ENCODE measurements at regions of chr16 and their contacts with region 1.

Region 1: DNA sequence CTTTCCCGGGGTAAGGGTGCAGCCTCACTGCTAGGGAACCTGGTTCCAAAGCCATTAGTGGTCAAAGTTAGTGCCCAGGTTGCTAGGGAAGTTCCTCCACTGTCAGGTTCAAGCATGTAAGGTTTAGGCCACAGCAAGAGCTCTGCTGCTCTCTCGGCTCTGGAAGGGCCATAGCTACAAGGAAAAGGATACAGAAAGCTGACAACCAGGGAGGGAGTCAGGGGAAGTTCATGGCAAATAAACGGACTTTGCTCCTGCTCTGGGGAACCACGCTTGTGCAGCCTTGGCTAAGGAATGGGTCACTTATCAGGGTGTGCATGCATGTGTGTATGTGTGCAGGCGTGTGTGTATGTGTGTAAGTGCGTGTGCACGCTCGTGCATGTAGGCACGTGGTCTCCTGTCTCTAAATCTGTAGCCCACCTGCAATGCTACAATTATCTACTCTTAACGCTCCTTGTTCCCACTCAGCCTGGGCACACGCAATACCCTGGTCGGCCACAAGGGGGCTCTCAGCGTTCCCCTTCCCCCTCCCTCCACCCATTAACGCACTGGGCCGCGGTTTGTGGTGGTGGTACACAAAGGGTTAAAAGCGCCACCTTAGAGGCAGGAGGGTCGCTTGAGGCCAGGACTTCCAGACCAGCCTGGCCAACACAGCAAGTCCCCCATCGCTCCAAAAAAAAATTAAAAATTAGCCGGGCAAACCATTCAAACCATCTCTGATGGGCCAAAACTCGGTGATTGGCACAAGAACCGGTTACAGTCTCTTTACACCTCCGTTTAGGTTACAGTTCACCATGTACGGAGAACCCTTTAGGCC is 48.4 kb upstream of the KDM8 start:
- DNase-seq: peak; percentile 46 to 60 (median 53)
- H3K4me3 ChIP-seq: no peak overlapping the region
- H3K4me3 Mint-ChIP-seq: peak overlapping the region in 2 of 8 donors; percentile 19 to 48
- H3K27ac ChIP-seq: no peak overlapping the region
- H3K27ac Mint-ChIP-seq: peak overlapping the region in 5 of 7 donors; percentile 35 to 72 (median 64)
- H3K4me1 ChIP-seq: peaks cover 8% of the 10 kb centered on the region
- H3K4me1 Mint-ChIP-seq: peaks cover 3 to 9% (median 5%) of the 10 kb centered on the region in 4 donors
- H3K27me3 ChIP-seq: no peaks in the 10 kb centered on the region
- H3K27me3 Mint-ChIP-seq: no peaks in the 10 kb centered on the region

Region 2: DNA sequence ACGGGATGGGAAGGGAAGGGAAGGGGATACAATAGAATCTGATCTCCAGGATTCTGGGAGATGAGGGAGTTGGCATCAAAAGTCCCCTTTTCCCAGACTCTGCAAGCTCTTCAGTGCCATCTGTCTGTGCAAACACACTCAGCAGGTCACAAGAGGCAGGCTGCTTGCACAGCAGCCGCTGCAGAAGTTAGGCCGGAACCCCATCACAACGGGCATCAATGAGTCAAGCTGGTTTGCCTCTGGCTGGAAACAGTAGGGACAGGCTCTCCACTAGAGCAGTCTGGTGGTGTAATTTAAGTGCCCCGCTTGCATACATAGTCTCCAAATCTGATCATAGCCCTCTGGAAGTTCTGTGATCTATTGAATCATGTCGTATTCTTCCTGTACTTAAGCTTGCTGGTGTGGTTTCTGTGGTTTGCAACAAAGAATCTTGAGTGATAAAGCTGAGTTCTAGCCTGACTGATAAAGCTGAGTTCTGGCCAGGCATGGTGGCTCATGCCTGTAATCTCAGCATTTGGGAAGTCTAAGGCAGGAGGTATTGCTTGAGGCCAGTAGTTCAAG is 14.7 kb after region 1 on chr16:
- CTCF ChIA-PET with region 1: interaction called, 415 read pairs
- POLR2A ChIA-PET with region 1: interaction called, 11 read pairs
- intact Hi-C with region 1: loop called (anchors 1 kb)
- DNase-seq: peak; percentile 86 to 93 (median 87)
- H3K4me3 ChIP-seq: no peak overlapping the region
- H3K4me3 Mint-ChIP-seq: peak overlapping the region in 7 of 8 donors; percentile 35 to 77 (median 74)
- H3K27ac ChIP-seq: no peak overlapping the region
- H3K27ac Mint-ChIP-seq: peak overlapping the region; percentile 82 to 98 (median 96)
- H3K4me1 ChIP-seq: peaks cover 67% of the 10 kb centered on the region
- H3K4me1 Mint-ChIP-seq: peaks cover 46 to 74% (median 64%) of the 10 kb centered on the region in 4 donors
- H3K27me3 ChIP-seq: no peaks in the 10 kb centered on the region
- H3K27me3 Mint-ChIP-seq: no peaks in the 10 kb centered on the region

Region 3: GRCh38 chr16:27195941-27196595 is 41.2 kb after region 1 on chr16:
- CTCF ChIA-PET with region 1: interaction called, 9 read pairs
- POLR2A ChIA-PET with region 1: no interaction called
- intact Hi-C with region 1: loop called (anchors 1 kb)
- DNase-seq: peak; percentile 85 to 90 (median 86)
- H3K4me3 ChIP-seq: no peak overlapping the region
- H3K4me3 Mint-ChIP-seq: peak overlapping the region in 7 of 8 donors; percentile 46 to 89 (median 79)
- H3K27ac ChIP-seq: peak overlapping the region; percentile 43
- H3K27ac Mint-ChIP-seq: peak overlapping the region; percentile 85 to 99 (median 98)
- H3K4me1 ChIP-seq: peaks cover 70% of the 10 kb centered on the region
- H3K4me1 Mint-ChIP-seq: peaks cover 56 to 83% (median 71%) of the 10 kb centered on the region in 4 donors
- H3K27me3 ChIP-seq: no peaks in the 10 kb centered on the region
- H3K27me3 Mint-ChIP-seq: no peaks in the 10 kb centered on the region

Region 4: GRCh38 chr16:27424772-27425498 is 270.0 kb after region 1 on chr16:
- CTCF ChIA-PET with region 1: no interaction called
- POLR2A ChIA-PET with region 1: no interaction called
- intact Hi-C with region 1: no loop called
- DNase-seq: no peak
- H3K4me3 ChIP-seq: no peak overlapping the region
- H3K4me3 Mint-ChIP-seq: peak overlapping the region in 1 of 8 donors; percentile 52
- H3K27ac ChIP-seq: no peak overlapping the region
- H3K27ac Mint-ChIP-seq: peak overlapping the region; percentile 14 to 88 (median 71)
- H3K4me1 ChIP-seq: peaks cover 33% of the 10 kb centered on the region
- H3K4me1 Mint-ChIP-seq: peaks cover 23 to 42% (median 32%) of the 10 kb centered on the region in 4 donors
- H3K27me3 ChIP-seq: no peaks in the 10 kb centered on the region
- H3K27me3 Mint-ChIP-seq: no peaks in the 10 kb centered on the region

Region 5: GRCh38 chr16:27461483-27462171 is 306.7 kb after region 1 on chr16:
- CTCF ChIA-PET with region 1: interaction called, 7 read pairs
- POLR2A ChIA-PET with region 1: no interaction called
- intact Hi-C with region 1: loop called (anchors 1 kb)
- DNase-seq: no peak
- H3K4me3 ChIP-seq: no peak overlapping the region
- H3K4me3 Mint-ChIP-seq: peak overlapping the region in 1 of 8 donors; percentile 57
- H3K27ac ChIP-seq: no peak overlapping the region
- H3K27ac Mint-ChIP-seq: peak overlapping the region in 5 of 7 donors; percentile 12 to 81 (median 77)
- H3K4me1 ChIP-seq: peaks cover 61% of the 10 kb centered on the region
- H3K4me1 Mint-ChIP-seq: peaks cover 34 to 67% (median 50%) of the 10 kb centered on the region in 4 donors
- H3K27me3 ChIP-seq: no peaks in the 10 kb centered on the region
- H3K27me3 Mint-ChIP-seq: no peaks in the 10 kb centered on the region

Measured in CD4-positive, alpha-beta memory T cell (primary cell).